Adrenal gland (tissue), 19 donors: ENCODE measurements at regions of chr18 and their contacts with region 1.

Region 1: GRCh38 chr18:48445540-48445939 is 36.4 kb upstream of the ZBTB7C start:
- DNase-seq: peak; percentile 75 to 93 (median 85)
- H3K4me3 ChIP-seq: no peak overlapping the region
- H3K27ac ChIP-seq: no peak overlapping the region
- H3K4me1 ChIP-seq: peaks cover 0 to 4% of the 10 kb centered on the region in 2 donors
- H3K27me3 ChIP-seq: no peaks in the 10 kb centered on the region
- CTCF ChIP-seq: peak; percentile 75 to 92 (median 88)
- POLR2A ChIP-seq: no peak

Region 2: DNA sequence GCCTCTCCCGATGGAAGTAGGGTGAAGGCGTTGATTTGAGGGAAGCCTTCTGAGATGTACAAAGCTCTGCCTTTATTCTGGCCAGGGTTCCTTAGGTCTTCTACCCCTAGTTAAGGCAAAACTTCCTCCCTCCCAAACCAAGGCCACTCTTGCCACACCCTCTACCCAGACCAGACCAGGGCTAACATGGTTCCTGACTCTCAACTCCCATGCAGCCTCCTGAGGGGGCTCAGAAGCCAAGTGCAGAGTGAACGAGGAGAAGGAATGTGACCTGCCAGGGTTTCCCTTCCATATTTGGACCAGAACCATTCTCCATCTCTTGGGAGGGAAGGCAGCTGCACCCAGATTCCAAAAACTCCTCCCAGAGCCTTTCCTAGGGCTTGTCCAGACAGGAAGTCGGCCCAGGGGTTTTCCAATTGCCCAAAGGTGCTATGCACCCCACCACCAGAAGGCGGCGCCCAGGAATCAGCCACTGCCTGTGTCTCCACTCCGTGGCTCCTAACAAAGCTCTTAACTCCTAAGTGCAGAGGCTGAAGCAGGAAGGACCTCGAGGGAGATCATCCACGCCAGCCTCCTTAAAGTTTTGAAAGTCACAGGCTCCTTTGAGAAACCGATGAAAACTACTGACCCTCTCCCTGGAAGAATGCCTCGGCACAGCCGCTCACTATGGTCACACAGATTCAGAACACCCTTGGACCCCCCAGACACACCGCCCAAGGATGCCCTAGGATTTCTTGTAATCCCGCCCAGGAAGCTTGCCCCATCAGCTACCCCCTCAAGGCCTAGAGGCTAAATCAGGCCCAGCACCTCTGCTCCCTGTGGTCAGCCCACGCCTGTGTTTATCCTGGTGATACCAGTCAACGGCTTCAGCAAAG is 672.9 kb before region 1 on chr18:
- intact Hi-C with region 1: loop called (anchors 10 kb)
- DNase-seq: peak; percentile 59 to 86 (median 70)
- H3K4me3 ChIP-seq: no peak overlapping the region
- H3K27ac ChIP-seq: no peak overlapping the region
- H3K4me1 ChIP-seq: no peaks in the 10 kb centered on the region
- H3K27me3 ChIP-seq: no peaks in the 10 kb centered on the region
- CTCF ChIP-seq: peak; percentile 73 to 86 (median 80)
- POLR2A ChIP-seq: no peak

Region 3: DNA sequence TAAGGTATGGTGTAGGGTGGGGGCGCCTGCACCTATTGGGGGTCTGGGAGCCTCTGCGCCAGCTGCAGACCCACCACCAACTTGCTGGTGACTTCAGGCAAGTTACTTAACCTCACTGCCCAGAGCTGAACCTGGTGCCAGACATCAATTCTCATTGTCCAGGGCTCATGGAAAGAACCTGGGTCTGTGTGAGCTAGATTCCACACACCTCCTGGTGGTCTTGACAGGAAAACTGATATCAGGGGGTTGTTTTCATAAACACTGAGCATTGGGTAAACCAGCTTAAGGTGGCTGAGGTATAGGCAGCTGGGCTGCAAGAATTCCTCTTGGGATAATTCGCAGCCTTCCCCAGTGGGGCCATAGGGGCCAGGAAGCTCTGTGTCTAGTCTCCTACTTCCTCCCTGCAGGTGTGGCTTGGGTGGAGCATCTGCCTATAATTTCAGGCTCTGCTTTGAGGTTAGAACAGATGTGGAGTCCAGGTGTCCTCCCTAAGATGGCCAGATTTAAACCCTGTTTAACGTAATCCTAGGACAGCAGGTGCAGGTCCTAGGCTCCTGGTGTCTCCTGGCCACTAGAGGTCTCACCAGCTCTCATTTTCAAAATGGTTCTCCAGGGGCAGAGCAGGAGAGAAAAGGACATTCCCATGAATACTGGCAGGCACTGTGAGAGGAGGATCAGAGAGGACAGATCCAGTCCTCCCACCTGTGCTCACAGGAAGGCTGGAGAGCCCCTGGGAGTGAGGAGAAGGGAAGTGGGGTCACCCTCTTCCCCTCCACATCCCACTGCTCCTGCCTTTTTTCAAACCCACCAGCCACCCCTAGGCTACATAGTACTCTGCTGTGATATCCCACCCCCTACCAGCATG is 414.7 kb before region 1 on chr18:
- intact Hi-C with region 1: loop called in 1 of 2 experiments (anchors 5 kb)
- DNase-seq: peak; percentile 69 to 87 (median 76)
- H3K4me3 ChIP-seq: no peak overlapping the region
- H3K27ac ChIP-seq: peak overlapping the region in 2 of 5 donors; percentile 35 to 40
- H3K4me1 ChIP-seq: peaks cover 33 to 49% of the 10 kb centered on the region in 2 donors
- H3K27me3 ChIP-seq: no peaks in the 10 kb centered on the region
- CTCF ChIP-seq: peak; percentile 50 to 83 (median 80)
- POLR2A ChIP-seq: no peak

Region 4: DNA sequence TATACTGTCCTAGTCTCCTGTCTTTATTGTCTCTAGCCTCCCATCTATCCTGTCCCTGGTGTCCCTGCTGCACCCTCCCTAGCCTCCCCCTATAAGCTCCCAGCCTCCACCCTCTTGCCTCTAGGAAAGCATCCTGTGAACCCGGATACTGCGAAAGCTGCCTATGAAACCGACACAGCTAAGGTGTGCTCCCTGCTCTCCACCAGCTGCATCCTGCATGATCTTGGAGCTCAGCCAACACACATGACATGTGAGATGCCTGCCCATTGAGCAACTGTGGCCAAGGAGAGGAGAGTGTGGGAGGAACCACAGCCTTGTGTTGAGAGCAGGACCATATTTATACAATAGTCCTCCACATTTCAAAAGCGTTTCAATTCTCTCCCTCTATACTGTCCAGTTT is 223.4 kb before region 1 on chr18:
- intact Hi-C with region 1: loop called in 1 of 2 experiments (anchors 10 kb)
- DNase-seq: peak; percentile 58 to 88 (median 79)
- H3K4me3 ChIP-seq: no peak overlapping the region
- H3K27ac ChIP-seq: no peak overlapping the region
- H3K4me1 ChIP-seq: peaks cover 11 to 14% of the 10 kb centered on the region in 2 donors
- H3K27me3 ChIP-seq: no peaks in the 10 kb centered on the region
- CTCF ChIP-seq: no peak
- POLR2A ChIP-seq: no peak

Region 5: GRCh38 chr18:48345596-48345995 is 99.9 kb before region 1 on chr18:
- intact Hi-C with region 1: loop called in 1 of 2 experiments (anchors 10 kb)
- DNase-seq: peak in 2 of 7 donors; percentile 18 to 52
- H3K4me3 ChIP-seq: no peak overlapping the region
- H3K27ac ChIP-seq: no peak overlapping the region
- H3K4me1 ChIP-seq: peaks cover 21 to 49% of the 10 kb centered on the region in 2 donors
- H3K27me3 ChIP-seq: no peaks in the 10 kb centered on the region
- CTCF ChIP-seq: peak in 4 of 6 experiments; percentile 22 to 33 (median 26)
- POLR2A ChIP-seq: no peak